ENCODE measurements at regions of chr3 and their contacts with region 1.

Region 1: GRCh38 chr3:184711493-184712247 is at the start of gene MAGEF1:
- DNase-seq: peak; percentile 88
- ATAC-seq: peak; percentile 94
- total RNA-seq, gene MAGEF1: 31.3 TPM

Region 2: GRCh38 chr3:184583578-184584425 is 127.9 kb before region 1 on chr3:
- intact Hi-C with region 1: loop called (anchors 2 kb)
- DNase-seq: no peak
- ATAC-seq: peak; percentile 76

Measured in Right ventricle myocardium inferior (tissue), 1 donor.